ENCODE measurements at regions of chr19 and their contacts with region 1.

Region 1: GRCh38 chr19:19663256-19664038 is at the start of gene ATP13A1:
- DNase-seq: peak; percentile 95
- ATAC-seq: peak; percentile 69
- H3K4me3 Mint-ChIP-seq: peak within 1 kb of the TSS; percentile 88
- H3K27ac Mint-ChIP-seq: peak within 1 kb of the TSS; percentile 97
- H3K4me1 Mint-ChIP-seq: peaks cover 29% of the 10 kb centered on the region
- H3K27me3 Mint-ChIP-seq: no peaks in the 10 kb centered on the region
- CTCF ChIP-seq: no peak
- total RNA-seq, gene ATP13A1: 52.4 to 53.1 TPM

Region 2: DNA sequence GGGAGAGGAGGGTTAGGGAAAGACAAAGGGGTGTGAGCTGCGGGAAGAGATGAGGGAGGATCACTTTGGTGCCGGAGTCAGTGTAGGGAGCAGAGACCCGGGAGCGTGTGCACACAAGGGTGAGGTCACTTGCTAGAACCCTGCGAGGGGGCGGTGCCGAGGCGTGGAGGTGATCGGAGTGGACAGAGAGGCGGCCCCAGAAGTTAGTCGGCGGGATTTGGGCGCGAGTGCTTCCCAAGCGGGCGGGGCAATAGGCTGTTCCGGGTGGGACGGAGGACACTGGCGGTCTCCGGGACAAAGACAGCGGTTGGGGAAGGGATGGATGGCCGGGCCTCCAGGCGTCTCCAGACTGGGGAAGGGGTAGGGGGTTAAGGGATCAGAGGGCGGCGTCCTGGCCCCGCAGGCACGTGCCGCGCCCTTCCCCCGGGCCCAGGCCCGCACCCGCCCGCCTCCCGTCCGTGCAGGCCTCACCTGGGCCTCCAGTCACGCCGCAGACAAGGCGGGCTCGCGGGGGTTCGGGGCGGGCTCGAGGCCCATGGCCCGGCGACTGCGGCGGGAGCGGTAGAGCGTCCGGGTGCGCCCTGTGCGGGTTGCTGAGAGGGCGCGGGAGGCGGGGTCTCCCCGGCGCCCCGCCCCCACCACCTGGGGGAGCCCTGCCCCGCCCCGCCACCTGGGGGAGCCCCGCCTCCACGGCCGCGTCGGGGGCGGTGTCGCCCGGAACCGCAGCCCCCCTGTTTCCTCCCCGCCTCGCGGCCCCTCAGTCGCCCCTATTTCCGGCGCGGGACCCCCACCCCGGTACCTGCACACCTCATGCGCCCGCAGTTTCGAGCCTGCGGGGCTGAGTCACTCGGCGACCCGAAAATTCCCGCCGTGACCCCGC is 35.6 kb before region 1 on chr19 and contains the start of gene LPAR2:
- CTCF ChIA-PET with region 1: no interaction called
- POLR2A ChIA-PET with region 1: interaction called, 12 read pairs
- intact Hi-C with region 1: no loop called
- DNase-seq: peak; percentile 79
- ATAC-seq: peak; percentile 78
- H3K4me3 Mint-ChIP-seq: peak within 1 kb of the TSS; percentile 85
- H3K27ac Mint-ChIP-seq: peak within 1 kb of the TSS; percentile 94
- H3K4me1 Mint-ChIP-seq: peaks cover 24% of the 10 kb centered on the region
- H3K27me3 Mint-ChIP-seq: no peaks in the 10 kb centered on the region
- CTCF ChIP-seq: no peak
- total RNA-seq, gene LPAR2: 26.6 to 28.2 TPM

Region 3: DNA sequence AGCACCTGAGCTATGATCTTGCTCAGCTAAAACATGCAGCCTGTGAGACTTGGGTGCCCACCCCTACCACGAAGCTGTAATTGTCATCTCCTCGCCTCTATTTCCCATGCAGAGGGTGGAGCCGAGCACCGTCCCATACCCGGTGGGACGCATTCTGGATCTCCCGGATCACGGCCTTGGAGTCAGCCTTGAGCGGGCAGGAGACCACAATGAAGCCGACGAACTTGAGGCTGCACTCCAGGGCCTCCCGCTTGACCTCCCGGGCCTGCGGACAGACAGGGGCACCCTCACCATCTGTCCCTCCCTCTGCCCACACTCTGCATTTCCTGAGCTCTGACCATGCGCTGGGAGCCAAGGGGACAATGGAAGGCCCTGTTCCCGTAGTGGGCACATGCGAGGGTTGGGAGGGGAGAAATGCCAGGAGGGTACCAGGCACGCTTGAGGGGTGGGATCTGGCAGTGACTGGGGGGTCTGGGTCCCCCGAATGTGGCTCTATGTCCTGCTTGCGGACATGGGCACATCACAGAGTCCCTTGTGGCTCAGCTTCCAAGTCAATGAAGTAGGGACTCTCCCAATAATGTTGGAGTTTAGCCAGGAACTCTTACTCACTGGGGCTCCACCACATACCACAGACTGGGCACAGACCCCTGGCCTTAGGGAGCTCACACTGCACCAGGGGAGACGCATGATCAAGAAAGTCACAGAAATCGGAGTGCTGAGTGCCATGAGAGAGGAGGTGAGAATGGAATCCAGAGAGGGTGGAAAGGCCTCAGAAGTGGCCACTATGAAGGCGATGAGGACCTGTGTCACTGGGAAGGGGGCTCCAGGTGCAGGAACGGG is 10.8 kb before region 1 on chr19:
- CTCF ChIA-PET with region 1: no interaction called
- POLR2A ChIA-PET with region 1: interaction called, 23 read pairs
- intact Hi-C with region 1: no loop called
- DNase-seq: no peak
- ATAC-seq: no peak
- H3K4me3 Mint-ChIP-seq: no peak overlapping the region
- H3K27ac Mint-ChIP-seq: no peak overlapping the region
- H3K4me1 Mint-ChIP-seq: peaks cover 3% of the 10 kb centered on the region
- H3K27me3 Mint-ChIP-seq: no peaks in the 10 kb centered on the region
- CTCF ChIP-seq: no peak

Region 4: DNA sequence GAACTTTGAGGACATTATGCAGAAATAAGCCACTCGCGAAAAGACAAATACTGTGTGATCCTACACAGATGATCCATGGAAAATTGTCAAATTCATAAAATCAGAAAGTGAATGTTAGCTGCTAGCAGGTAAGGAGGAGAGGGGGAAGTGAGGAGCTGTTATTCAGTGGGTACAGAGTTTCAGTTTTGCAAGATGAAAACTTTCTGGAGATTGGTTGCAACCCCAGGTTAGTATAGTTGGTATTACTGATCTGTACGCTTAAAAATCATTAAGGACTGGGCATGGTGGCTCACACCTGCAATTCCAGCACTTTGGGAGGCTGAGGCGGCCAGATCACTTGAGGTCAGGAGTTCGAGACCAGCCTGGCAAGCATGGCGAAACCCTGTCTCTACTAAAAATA is 23.1 kb after region 1 on chr19:
- CTCF ChIA-PET with region 1: no interaction called
- POLR2A ChIA-PET with region 1: interaction called, 17 read pairs
- intact Hi-C with region 1: no loop called
- DNase-seq: no peak
- ATAC-seq: peak; percentile 18
- H3K4me3 Mint-ChIP-seq: no peak overlapping the region
- H3K27ac Mint-ChIP-seq: no peak overlapping the region
- H3K4me1 Mint-ChIP-seq: no peaks in the 10 kb centered on the region
- H3K27me3 Mint-ChIP-seq: no peaks in the 10 kb centered on the region
- CTCF ChIP-seq: no peak

Region 5: GRCh38 chr19:19732579-19733501 is 69.4 kb after region 1 on chr19 and contains the start of gene ZNF14:
- CTCF ChIA-PET with region 1: interaction called, 5 read pairs
- POLR2A ChIA-PET with region 1: interaction called, 12 read pairs
- intact Hi-C with region 1: no loop called
- DNase-seq: peak; percentile 97
- ATAC-seq: peak; percentile 100
- H3K4me3 Mint-ChIP-seq: peak within 1 kb of the TSS; percentile 89
- H3K27ac Mint-ChIP-seq: peak within 1 kb of the TSS; percentile 93
- H3K4me1 Mint-ChIP-seq: peaks cover 20% of the 10 kb centered on the region
- H3K27me3 Mint-ChIP-seq: no peaks in the 10 kb centered on the region
- CTCF ChIP-seq: no peak
- total RNA-seq, gene ZNF14: 8.6 to 9.3 TPM

Measured in activated CD8-positive, alpha-beta T cell treated with anti-CD3 and anti-CD28 coated beads for 36 hours (primary cell).